ENCODE measurements at regions of chrX and their contacts with region 1.

Region 1: DNA sequence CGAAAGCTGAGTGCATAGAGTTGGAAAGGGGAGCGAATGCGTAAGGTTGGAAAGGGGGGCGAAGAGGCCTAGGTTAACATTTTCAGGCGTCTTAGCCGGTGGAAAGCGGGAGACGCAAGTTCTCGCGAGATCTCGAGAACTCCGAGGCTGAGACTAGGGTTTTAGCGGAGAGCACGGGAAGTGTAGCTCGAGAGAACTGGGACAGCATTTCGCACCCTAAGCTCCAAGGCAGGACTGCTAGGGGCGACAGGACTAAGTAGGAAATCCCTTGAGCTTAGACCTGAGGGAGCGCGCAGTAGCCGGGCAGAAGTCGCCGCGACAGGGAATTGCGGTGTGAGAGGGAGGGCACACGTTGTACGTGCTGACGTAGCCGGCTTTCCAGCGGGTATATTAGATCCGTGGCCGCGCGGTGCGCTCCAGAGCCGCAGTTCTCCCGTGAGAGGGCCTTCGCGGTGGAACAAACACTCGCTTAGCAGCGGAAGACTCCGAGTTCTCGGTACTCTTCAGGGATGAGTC is at the start of gene DDX3X:
- DNase-seq: peak; percentile 87
- H3K4me3 ChIP-seq: peak within 1 kb of the TSS; percentile 69 to 95 (median 87)
- H3K27ac ChIP-seq: peak within 1 kb of the TSS; percentile 96
- H3K4me1 ChIP-seq: peaks cover 13% of the 10 kb centered on the region
- H3K27me3 ChIP-seq: no peaks in the 10 kb centered on the region
- CTCF ChIP-seq: no peak
- POLR2A ChIP-seq: peak; percentile 99
- total RNA-seq, gene DDX3X: 300 and 304 TPM in 2 replicates

Region 2: GRCh38 chrX:41148553-41148952 is 185.2 kb before region 1 on chrX:
- CTCF ChIA-PET with region 1: no interaction called
- POLR2A ChIA-PET with region 1: interaction called, 9 read pairs
- dilution Hi-C with region 1: no loop called
- intact Hi-C with region 1: loop called (anchors 2 kb)
- DNase-seq: peak; percentile 62
- H3K4me3 ChIP-seq: no peak overlapping the region
- H3K27ac ChIP-seq: peak overlapping the region; percentile 80
- H3K4me1 ChIP-seq: peaks cover 37% of the 10 kb centered on the region
- H3K27me3 ChIP-seq: no peaks in the 10 kb centered on the region
- CTCF ChIP-seq: no peak
- POLR2A ChIP-seq: no peak

Region 3: GRCh38 chrX:41259516-41259915 is 74.3 kb before region 1 on chrX:
- CTCF ChIA-PET with region 1: no interaction called
- POLR2A ChIA-PET with region 1: no interaction called
- dilution Hi-C with region 1: no loop called
- intact Hi-C with region 1: no loop called
- DNase-seq: no peak
- H3K4me3 ChIP-seq: no peak overlapping the region
- H3K27ac ChIP-seq: no peak overlapping the region
- H3K4me1 ChIP-seq: no peaks in the 10 kb centered on the region
- H3K27me3 ChIP-seq: no peaks in the 10 kb centered on the region
- CTCF ChIP-seq: no peak
- POLR2A ChIP-seq: no peak

Region 4: DNA sequence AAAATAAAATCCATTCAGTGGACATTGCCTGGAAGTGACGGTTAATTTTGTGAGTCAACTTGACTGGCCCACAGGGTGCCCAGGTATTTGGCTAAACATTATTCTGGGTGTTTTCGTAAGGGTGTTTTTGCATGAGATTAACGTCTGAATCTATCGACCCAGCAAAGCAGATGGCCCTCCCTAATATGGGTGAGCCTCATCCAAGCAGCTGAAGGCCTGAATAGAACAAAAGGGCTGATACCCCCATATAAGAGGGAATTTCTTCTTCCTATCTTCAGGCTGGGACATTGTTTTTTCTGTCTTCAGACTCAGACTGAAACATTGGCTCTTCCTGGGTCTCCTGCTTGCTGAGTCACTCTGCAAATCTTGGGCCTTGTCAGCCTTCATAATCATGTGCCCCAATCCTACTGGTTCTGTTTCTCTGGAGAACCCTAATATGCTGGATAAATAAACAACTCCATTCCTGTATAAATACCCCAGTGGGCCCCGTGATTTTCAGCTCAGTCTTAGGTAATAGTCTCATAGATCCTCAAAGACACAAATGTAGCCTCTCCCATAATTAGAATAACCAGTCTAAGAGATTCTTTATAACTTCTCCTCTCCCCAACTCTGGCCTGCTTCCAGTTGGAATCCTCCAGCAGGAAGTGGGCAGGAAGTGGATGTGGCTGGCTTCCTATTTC is 32.9 kb before region 1 on chrX:
- CTCF ChIA-PET with region 1: no interaction called
- POLR2A ChIA-PET with region 1: interaction called, 5 read pairs
- dilution Hi-C with region 1: no loop called
- intact Hi-C with region 1: loop called (anchors 2 kb)
- DNase-seq: peak; percentile 7
- H3K4me3 ChIP-seq: no peak overlapping the region
- H3K27ac ChIP-seq: peak overlapping the region; percentile 65
- H3K4me1 ChIP-seq: peaks cover 16% of the 10 kb centered on the region
- H3K27me3 ChIP-seq: no peaks in the 10 kb centered on the region
- CTCF ChIP-seq: no peak
- POLR2A ChIP-seq: no peak

Region 5: GRCh38 chrX:41441934-41442823 is 108.4 kb after region 1 on chrX:
- CTCF ChIA-PET with region 1: no interaction called
- POLR2A ChIA-PET with region 1: no interaction called
- dilution Hi-C with region 1: no loop called
- intact Hi-C with region 1: loop called (anchors 5 kb)
- DNase-seq: peak; percentile 53
- H3K4me3 ChIP-seq: peak overlapping the region in 2 of 3 experiments; percentile 7 to 32
- H3K27ac ChIP-seq: no peak overlapping the region
- H3K4me1 ChIP-seq: no peaks in the 10 kb centered on the region
- H3K27me3 ChIP-seq: no peaks in the 10 kb centered on the region
- CTCF ChIP-seq: peak; percentile 44 to 69
- POLR2A ChIP-seq: no peak

Region 6: DNA sequence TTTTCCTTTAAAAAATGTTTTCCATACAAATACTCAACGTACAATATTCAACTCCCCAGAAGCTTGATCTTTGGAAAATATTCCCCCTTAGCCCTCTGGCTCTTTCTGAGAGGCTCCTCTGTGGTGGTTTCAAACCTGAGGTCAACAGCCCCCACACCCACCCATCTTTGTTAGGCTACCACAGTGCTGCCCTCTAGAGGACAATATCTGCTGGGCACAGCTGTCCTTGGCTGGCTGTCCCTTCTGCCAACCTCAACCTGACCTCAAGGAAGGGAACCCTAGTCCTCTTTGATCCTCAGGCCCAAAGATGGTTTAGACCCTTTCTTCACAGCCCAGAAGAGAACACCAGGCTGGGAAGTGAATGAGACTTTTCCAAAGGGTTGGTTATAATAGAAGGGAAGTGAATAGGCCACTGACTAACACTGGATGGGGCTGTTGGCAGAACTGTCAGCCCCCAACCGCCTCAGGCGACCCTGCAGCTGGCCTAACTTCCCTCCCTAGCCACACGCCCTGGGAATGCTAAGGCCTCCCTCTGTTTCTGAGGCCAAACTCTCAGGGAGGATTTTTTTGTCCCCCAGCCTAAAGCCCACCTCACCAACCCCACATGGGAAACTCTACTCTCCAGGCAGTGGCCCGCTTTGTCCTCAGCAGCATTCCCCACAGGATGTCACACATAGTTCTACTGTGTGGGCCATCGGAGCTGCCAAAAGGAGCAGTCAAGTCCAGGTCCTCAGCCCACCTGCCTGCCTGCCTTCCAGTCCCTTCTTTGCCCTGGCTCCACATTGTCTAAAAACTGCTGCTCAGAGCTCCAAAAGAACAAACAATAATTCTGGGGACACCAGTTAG is 147.7 kb after region 1 on chrX:
- CTCF ChIA-PET with region 1: no interaction called
- POLR2A ChIA-PET with region 1: no interaction called
- dilution Hi-C with region 1: no loop called
- intact Hi-C with region 1: no loop called
- DNase-seq: peak; percentile 2
- H3K4me3 ChIP-seq: no peak overlapping the region
- H3K27ac ChIP-seq: no peak overlapping the region
- H3K4me1 ChIP-seq: no peaks in the 10 kb centered on the region
- H3K27me3 ChIP-seq: no peaks in the 10 kb centered on the region
- CTCF ChIP-seq: peak; percentile 37 to 42
- POLR2A ChIP-seq: no peak